ENCODE measurements at regions of chr1 and their contacts with region 1.

Region 1: DNA sequence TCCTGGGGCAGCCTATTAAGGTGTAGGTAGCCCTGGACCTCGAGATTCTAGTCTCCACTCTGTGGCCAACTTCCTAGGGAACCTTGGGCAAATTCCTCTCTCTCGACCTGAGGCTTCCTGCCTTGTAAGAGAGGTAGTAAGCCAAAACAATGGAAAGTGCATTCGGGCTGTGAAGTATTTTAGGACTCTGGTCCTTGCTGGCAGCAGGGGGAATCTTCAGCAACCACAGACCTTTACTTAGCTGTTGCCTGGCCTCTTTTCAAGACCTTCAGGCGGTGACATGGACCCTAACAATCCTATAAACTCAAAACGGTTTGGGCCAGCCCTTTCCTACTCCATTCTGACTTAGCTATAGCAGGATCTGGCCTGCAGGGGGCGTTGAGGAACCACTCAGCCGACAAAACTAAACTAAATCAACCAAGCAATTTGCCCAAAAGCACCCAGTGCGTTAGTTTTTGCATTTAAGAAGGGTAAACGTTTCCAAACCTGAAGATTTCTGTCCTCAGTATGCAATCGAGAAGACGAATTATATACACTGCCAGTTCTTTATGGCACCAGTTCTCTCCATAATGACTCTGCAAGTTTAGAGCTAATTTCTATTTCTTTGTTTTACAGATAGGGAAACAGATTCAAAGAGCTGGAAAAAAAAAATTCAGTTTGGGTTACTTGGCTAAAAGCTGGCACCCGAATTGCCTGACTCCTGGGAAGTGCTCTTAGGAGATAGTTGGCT is 10.9 kb upstream of the SESN2 start:
- DNase-seq: peak; percentile 86
- ATAC-seq: peak; percentile 16
- H3K4me3 ChIP-seq: peak overlapping the region in 4 of 5 experiments; percentile 15 to 45 (median 38)
- H3K4me3 Mint-ChIP-seq: peak overlapping the region; percentile 83
- H3K27ac ChIP-seq: peak overlapping the region; percentile 74 to 77
- H3K27ac Mint-ChIP-seq: peak overlapping the region; percentile 88
- H3K4me1 ChIP-seq: peaks cover 43 to 51% of the 10 kb centered on the region in 2 donors
- H3K4me1 Mint-ChIP-seq: peaks cover 49% of the 10 kb centered on the region
- H3K27me3 ChIP-seq: no peaks in the 10 kb centered on the region
- H3K27me3 Mint-ChIP-seq: no peaks in the 10 kb centered on the region
- CTCF ChIP-seq: peak; percentile 86

Region 2: GRCh38 chr1:28235755-28236655 is 12.4 kb before region 1 on chr1 and contains the start of gene ATP5IF1:
- CTCF ChIA-PET with region 1: interaction called, 65 read pairs
- POLR2A ChIA-PET with region 1: interaction called, 46 read pairs
- intact Hi-C with region 1: loop called (anchors 1 kb)
- DNase-seq: peak; percentile 96
- ATAC-seq: peak; percentile 96
- H3K4me3 ChIP-seq: peak within 1 kb of the TSS; percentile 80 to 99 (median 97)
- H3K4me3 Mint-ChIP-seq: no peak within 1 kb of the TSS
- H3K27ac ChIP-seq: peak within 1 kb of the TSS; percentile 72 to 73
- H3K27ac Mint-ChIP-seq: no peak within 1 kb of the TSS
- H3K4me1 ChIP-seq: peaks cover 17 to 40% of the 10 kb centered on the region in 2 donors
- H3K4me1 Mint-ChIP-seq: peaks cover 20% of the 10 kb centered on the region
- H3K27me3 ChIP-seq: no peaks in the 10 kb centered on the region
- H3K27me3 Mint-ChIP-seq: no peaks in the 10 kb centered on the region
- CTCF ChIP-seq: no peak
- total RNA-seq, gene ATP5IF1: 81.1 and 88.1 TPM in 2 replicates

Region 3: DNA sequence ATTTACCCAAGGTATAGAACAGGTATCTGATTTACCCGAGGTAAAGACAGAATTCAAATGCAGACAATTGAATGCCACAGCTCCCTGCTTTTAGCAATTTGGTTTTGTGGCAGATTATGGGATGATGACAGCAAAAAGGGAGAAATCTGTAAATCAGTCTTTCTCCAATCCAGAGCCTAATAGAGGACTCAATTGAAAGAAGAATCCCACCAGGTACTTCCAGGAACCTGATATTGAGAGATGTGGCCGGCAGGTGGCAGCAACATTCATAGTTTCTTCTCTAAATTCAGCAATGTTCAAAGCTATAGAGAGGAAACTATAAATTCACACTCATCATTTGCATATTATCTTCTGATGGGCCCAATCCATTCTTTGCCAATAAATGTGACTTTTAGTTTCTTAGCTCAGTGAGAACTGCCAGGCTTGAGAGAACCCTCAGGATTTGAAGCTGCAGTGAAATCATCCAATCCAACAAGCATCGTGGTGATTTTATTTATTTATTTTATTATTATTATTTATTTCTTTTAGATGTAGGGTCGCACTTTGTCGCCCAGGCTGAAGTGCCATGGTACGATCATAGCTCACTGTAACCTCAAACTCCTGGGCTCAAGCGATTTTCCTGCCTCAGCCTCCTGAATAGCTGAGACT is 111.3 kb after region 1 on chr1:
- CTCF ChIA-PET with region 1: interaction called, 28 read pairs
- POLR2A ChIA-PET with region 1: interaction called, 3 read pairs
- intact Hi-C with region 1: no loop called
- DNase-seq: peak; percentile 78
- ATAC-seq: peak; percentile 73
- H3K4me3 ChIP-seq: no peak overlapping the region
- H3K4me3 Mint-ChIP-seq: no peak overlapping the region
- H3K27ac ChIP-seq: no peak overlapping the region
- H3K27ac Mint-ChIP-seq: no peak overlapping the region
- H3K4me1 ChIP-seq: peaks cover 0 to 4% of the 10 kb centered on the region in 2 donors
- H3K4me1 Mint-ChIP-seq: peaks cover 2% of the 10 kb centered on the region
- H3K27me3 ChIP-seq: no peaks in the 10 kb centered on the region
- H3K27me3 Mint-ChIP-seq: no peaks in the 10 kb centered on the region
- CTCF ChIP-seq: peak; percentile 80

Region 4: GRCh38 chr1:28505406-28506187 is 257.1 kb after region 1 on chr1 and contains the start of gene RCC1:
- CTCF ChIA-PET with region 1: interaction called, 8 read pairs
- POLR2A ChIA-PET with region 1: interaction called, 5 read pairs
- intact Hi-C with region 1: loop called (anchors 2 kb)
- DNase-seq: peak; percentile 98
- ATAC-seq: peak; percentile 94
- H3K4me3 ChIP-seq: peak within 1 kb of the TSS; percentile 60 to 84 (median 80)
- H3K4me3 Mint-ChIP-seq: peak within 1 kb of the TSS; percentile 97
- H3K27ac ChIP-seq: peak within 1 kb of the TSS; percentile 65 to 67
- H3K27ac Mint-ChIP-seq: peak within 1 kb of the TSS; percentile 98
- H3K4me1 ChIP-seq: peaks cover 38 to 48% of the 10 kb centered on the region in 2 donors
- H3K4me1 Mint-ChIP-seq: peaks cover 42% of the 10 kb centered on the region
- H3K27me3 ChIP-seq: no peaks in the 10 kb centered on the region
- H3K27me3 Mint-ChIP-seq: no peaks in the 10 kb centered on the region
- CTCF ChIP-seq: no peak
- total RNA-seq, gene RCC1: 16.3 and 17.5 TPM in 2 replicates

Region 5: DNA sequence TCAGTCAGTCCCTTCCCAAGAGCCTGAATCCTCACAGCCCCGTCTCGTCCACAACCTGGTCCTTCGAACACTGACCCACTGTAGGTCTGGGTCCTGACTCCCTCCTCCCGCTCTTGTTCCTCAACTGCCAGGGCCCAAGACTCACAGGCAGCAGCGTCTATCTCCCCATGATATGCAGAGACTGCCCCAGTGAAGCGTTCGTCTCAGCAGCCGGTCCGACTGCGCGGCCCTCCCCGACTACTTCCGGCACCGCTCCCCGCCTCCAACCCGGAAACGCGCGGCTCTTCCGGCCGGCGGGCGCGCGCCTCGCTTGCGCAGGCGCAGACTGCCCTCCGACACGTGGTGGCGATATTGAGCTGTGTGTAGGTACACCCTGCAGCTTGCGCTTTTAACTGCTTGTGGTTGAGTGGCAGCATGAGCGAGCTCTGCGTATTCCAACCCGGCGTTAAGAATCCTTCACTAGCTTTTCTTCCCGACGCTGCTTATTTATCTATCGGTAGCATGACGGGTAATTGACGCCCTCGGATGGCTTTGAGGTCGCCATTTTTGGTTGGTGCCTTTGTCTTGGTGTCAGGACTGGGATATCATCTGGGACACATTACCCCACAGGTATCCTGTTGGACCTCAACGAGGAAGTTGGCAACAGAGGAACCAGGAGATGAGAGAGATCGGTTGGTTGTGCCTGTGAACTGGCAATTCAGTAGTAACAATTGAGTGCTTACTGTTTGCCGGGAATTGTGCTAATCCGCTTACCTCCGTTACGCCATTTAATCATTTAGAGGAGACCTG is 394.6 kb after region 1 on chr1 and contains the start of gene TAF12:
- CTCF ChIA-PET with region 1: no interaction called
- POLR2A ChIA-PET with region 1: no interaction called
- intact Hi-C with region 1: loop called (anchors 10 kb)
- DNase-seq: peak; percentile 97
- ATAC-seq: peak; percentile 84
- H3K4me3 ChIP-seq: peak within 1 kb of the TSS; percentile 67 to 91 (median 89)
- H3K4me3 Mint-ChIP-seq: peak within 1 kb of the TSS; percentile 100
- H3K27ac ChIP-seq: peak within 1 kb of the TSS; percentile 97 to 100
- H3K27ac Mint-ChIP-seq: peak within 1 kb of the TSS; percentile 99
- H3K4me1 ChIP-seq: peaks cover 29 to 31% of the 10 kb centered on the region in 2 donors
- H3K4me1 Mint-ChIP-seq: peaks cover 49% of the 10 kb centered on the region
- H3K27me3 ChIP-seq: no peaks in the 10 kb centered on the region
- H3K27me3 Mint-ChIP-seq: no peaks in the 10 kb centered on the region
- CTCF ChIP-seq: peak; percentile 54
- total RNA-seq, gene TAF12: 18.5 and 19.1 TPM in 2 replicates

Region 6: GRCh38 chr1:28877132-28877781 is 628.8 kb after region 1 on chr1:
- CTCF ChIA-PET with region 1: interaction called, 18 read pairs
- POLR2A ChIA-PET with region 1: no interaction called
- intact Hi-C with region 1: loop called (anchors 10 kb)
- DNase-seq: peak; percentile 84
- ATAC-seq: peak; percentile 78
- H3K4me3 ChIP-seq: no peak overlapping the region
- H3K4me3 Mint-ChIP-seq: no peak overlapping the region
- H3K27ac ChIP-seq: no peak overlapping the region
- H3K27ac Mint-ChIP-seq: no peak overlapping the region
- H3K4me1 ChIP-seq: peaks cover 4 to 5% of the 10 kb centered on the region in 2 donors
- H3K4me1 Mint-ChIP-seq: peaks cover 8% of the 10 kb centered on the region
- H3K27me3 ChIP-seq: no peaks in the 10 kb centered on the region
- H3K27me3 Mint-ChIP-seq: no peaks in the 10 kb centered on the region
- CTCF ChIP-seq: peak; percentile 99

Measured in B cell (primary cell).